ENCODE measurements at regions of chr18 and their contacts with region 1.

Region 1: GRCh38 chr18:12947355-12948041 is at the start of gene SEH1L:
- DNase-seq: peak; percentile 100
- H3K4me3 ChIP-seq: peak within 1 kb of the TSS; percentile 63
- H3K27ac ChIP-seq: peak within 1 kb of the TSS; percentile 92 to 95
- H3K4me1 ChIP-seq: peaks cover 4% of the 10 kb centered on the region
- H3K27me3 ChIP-seq: no peaks in the 10 kb centered on the region
- CTCF ChIP-seq: no peak
- POLR2A ChIP-seq: peak; percentile 77
- total RNA-seq, gene SEH1L: 35.9 to 46.6 TPM

Region 2: GRCh38 chr18:12391618-12392165 is 555.8 kb before region 1 on chr18:
- intact Hi-C with region 1: loop called (anchors 10 kb)
- DNase-seq: peak; percentile 57
- H3K4me3 ChIP-seq: no peak overlapping the region
- H3K27ac ChIP-seq: no peak overlapping the region
- H3K4me1 ChIP-seq: no peaks in the 10 kb centered on the region
- H3K27me3 ChIP-seq: no peaks in the 10 kb centered on the region
- CTCF ChIP-seq: peak; percentile 58 to 88 (median 80)
- POLR2A ChIP-seq: no peak

Region 3: GRCh38 chr18:13338318-13338717 is 390.8 kb after region 1 on chr18:
- intact Hi-C with region 1: no loop called
- DNase-seq: no peak
- H3K4me3 ChIP-seq: no peak overlapping the region
- H3K27ac ChIP-seq: no peak overlapping the region
- H3K4me1 ChIP-seq: no peaks in the 10 kb centered on the region
- H3K27me3 ChIP-seq: no peaks in the 10 kb centered on the region
- CTCF ChIP-seq: no peak
- POLR2A ChIP-seq: no peak

Measured in prostate gland (tissue), 2 donors.